ENCODE measurements at regions of chr1 and their contacts with region 1.

Region 1: DNA sequence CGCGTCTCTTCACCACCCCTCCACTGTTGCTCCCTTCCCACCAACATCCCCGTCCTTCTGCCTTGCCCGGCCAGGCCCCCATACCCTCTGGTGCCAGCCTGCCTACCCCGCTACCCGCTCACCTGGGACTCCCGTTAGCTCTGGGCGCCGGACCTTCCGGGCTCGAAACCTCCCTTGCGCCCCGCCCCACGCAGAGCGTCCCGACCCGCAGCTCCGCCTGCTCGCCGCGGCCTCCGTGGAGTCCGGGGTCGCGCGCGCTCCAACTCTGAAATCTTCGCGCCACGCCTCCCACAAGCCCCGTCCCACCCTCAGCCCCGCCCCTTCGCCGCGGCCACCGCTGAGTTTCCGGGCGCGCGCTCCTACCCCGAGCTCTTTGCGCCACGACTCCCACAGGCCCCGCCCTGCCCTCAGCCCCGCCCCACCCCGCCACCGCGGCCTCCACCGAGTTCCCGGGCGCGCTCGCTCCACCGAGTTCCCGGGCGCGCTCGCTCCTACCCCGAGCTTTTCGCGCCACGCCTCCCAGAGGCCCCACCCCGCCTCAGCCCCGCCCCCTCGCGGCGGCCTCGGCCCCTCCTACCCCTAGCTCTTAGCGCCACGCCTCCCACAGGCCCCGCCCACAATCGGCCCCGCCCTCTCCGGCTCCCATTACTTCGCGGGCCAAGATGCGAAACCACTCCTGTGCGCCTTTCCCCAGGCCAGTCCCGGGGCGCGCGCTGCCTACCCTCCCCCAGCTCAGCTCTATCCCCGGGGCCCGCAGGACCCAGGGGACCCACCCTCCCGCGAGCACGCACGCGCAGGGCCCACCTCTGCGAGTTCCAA is at the start of gene IFT25:
- DNase-seq: peak; percentile 95
- H3K4me3 Mint-ChIP-seq: peak within 1 kb of the TSS; percentile 85
- H3K27ac Mint-ChIP-seq: peak within 1 kb of the TSS; percentile 75
- H3K4me1 Mint-ChIP-seq: peaks cover 36% of the 10 kb centered on the region
- H3K27me3 Mint-ChIP-seq: no peaks in the 10 kb centered on the region
- CTCF ChIP-seq: no peak
- total RNA-seq, gene IFT25: 20.6 and 22.3 TPM in 2 replicates

Region 2: GRCh38 chr1:53860967-53861411 is 84.7 kb before region 1 on chr1:
- CTCF ChIA-PET with region 1: interaction called, 28 read pairs
- POLR2A ChIA-PET with region 1: no interaction called
- intact Hi-C with region 1: loop called (anchors 1 kb)
- DNase-seq: peak; percentile 75
- H3K4me3 Mint-ChIP-seq: no peak overlapping the region
- H3K27ac Mint-ChIP-seq: no peak overlapping the region
- H3K4me1 Mint-ChIP-seq: no peaks in the 10 kb centered on the region
- H3K27me3 Mint-ChIP-seq: no peaks in the 10 kb centered on the region
- CTCF ChIP-seq: peak; percentile 82

Region 3: DNA sequence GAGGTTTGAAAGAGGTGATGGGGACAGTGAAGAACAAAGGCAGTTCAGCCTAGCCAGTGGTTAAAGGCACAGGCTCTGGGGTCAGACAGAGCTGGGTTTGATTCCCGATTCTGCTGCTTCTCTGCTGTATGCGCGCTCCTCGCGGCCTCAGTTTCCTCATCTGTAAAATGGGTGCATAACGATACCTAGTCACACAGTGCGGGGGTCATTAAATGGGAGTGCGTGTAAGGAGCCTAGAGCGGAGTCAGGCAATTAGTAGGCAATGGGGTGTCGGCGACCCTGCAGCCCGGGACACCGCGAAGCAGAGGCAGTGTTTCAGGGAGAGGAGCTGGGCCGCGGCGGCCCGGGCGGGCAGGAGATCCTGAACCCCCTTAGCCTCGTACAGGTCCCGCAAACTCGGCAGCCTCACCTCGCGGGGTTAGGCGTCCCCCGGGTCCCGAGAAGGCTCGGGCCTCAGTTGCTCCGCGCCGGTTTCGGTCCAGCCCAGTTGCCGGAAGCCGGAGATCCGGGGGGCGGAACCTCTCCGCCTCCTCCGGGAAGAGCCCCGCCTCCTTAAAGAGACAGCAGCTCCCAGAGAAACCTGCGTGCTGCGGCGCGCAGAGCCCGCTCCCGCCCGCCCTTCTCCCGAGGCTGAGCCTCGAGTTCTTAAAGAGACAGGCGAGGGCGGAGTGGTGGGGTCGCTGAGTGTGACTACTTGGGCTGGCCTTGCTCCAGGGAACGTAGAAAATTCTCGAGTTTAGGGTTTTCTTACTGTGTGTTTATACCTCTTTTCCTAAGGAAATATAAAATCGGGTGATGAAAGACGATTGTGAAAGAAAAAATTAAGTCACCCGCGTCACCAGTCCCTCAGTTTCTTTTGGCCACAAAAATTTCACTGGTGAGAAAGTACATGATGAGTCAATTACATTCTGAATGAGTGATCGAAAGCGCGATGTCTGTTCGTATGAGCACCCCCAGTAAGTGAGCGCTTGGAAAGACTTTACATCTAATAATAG is 56.0 kb before region 1 on chr1 and contains the start of gene YIPF1:
- CTCF ChIA-PET with region 1: interaction called, 5 read pairs
- POLR2A ChIA-PET with region 1: interaction called, 20 read pairs
- intact Hi-C with region 1: no loop called
- DNase-seq: peak; percentile 89
- H3K4me3 Mint-ChIP-seq: peak within 1 kb of the TSS; percentile 84
- H3K27ac Mint-ChIP-seq: peak within 1 kb of the TSS; percentile 93
- H3K4me1 Mint-ChIP-seq: peaks cover 4% of the 10 kb centered on the region
- H3K27me3 Mint-ChIP-seq: no peaks in the 10 kb centered on the region
- CTCF ChIP-seq: no peak
- total RNA-seq, gene YIPF1: 15.8 and 20.1 TPM in 2 replicates

Region 4: DNA sequence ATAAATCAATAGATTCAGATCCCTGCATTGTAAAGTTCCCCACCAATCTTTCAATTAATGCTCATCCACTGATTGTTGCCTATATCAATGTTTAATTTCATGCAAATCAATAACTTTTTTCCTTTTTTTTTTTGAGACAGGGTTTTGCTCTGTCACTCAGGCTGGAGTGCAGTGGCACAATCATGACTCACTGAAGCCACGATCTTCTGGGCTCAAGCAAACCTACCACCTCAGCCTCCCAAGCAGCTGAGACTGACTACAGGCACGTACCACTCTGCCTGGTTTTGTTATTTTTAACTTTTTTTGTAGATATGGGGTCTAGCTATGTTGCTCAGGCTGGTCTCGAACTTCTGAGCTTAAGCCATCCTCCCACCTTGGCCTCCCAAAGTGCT is 26.0 kb before region 1 on chr1:
- CTCF ChIA-PET with region 1: interaction called, 3 read pairs
- POLR2A ChIA-PET with region 1: interaction called, 13 read pairs
- intact Hi-C with region 1: no loop called
- DNase-seq: no peak
- H3K4me3 Mint-ChIP-seq: no peak overlapping the region
- H3K27ac Mint-ChIP-seq: peak overlapping the region; percentile 67
- H3K4me1 Mint-ChIP-seq: no peaks in the 10 kb centered on the region
- H3K27me3 Mint-ChIP-seq: no peaks in the 10 kb centered on the region
- CTCF ChIP-seq: no peak

Region 5: DNA sequence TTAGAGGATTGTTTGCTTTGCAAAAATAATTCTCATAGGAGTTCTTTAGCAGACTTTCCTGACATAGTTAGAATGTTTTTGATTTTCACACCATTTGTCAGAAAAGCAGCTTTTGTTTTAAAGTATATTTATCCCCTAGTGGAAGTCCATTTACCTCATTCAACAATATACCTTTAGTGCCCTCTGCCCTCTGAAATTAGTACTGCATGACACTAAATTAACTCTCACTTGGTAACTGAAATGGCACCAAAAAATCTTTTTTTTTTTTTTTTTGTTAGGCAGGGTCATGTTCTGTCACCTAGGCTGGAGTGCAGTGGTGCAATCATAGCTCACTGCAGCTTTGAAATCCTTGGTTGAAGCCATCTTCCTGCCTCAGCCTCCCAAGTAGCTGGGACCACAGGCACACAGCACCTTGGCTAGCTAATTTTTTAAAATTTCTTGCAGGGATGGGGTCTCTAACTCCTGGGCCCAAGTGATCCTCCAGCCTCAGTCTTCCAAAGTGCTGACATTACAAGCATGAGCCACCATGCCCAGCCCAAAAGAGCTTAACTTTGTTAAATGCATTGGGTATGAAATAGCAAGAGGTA is 14.1 kb after region 1 on chr1:
- CTCF ChIA-PET with region 1: interaction called, 22 read pairs
- POLR2A ChIA-PET with region 1: interaction called, 35 read pairs
- intact Hi-C with region 1: no loop called
- DNase-seq: peak; percentile 49
- H3K4me3 Mint-ChIP-seq: no peak overlapping the region
- H3K27ac Mint-ChIP-seq: no peak overlapping the region
- H3K4me1 Mint-ChIP-seq: peaks cover 20% of the 10 kb centered on the region
- H3K27me3 Mint-ChIP-seq: no peaks in the 10 kb centered on the region
- CTCF ChIP-seq: peak; percentile 46

Region 6: GRCh38 chr1:53982034-53982762 is 36.6 kb after region 1 on chr1:
- CTCF ChIA-PET with region 1: no interaction called
- POLR2A ChIA-PET with region 1: no interaction called
- intact Hi-C with region 1: no loop called
- DNase-seq: no peak
- H3K4me3 Mint-ChIP-seq: peak overlapping the region; percentile 34
- H3K27ac Mint-ChIP-seq: no peak overlapping the region
- H3K4me1 Mint-ChIP-seq: no peaks in the 10 kb centered on the region
- H3K27me3 Mint-ChIP-seq: no peaks in the 10 kb centered on the region
- CTCF ChIP-seq: no peak